Activated T-helper 1 cell treated with anti-CD3 and anti-CD28 coated beads, Interleukin-12 subunit alpha, Interleukin-12 subunit beta, Interleukin-2, Interleukin-4 antibody, amounts not matched to agents 30 ng/mL and 10 ng/mL and 1 ng/mL, durations not matched to agents 14 hours and 24 hours and 36 hours (primary cell): ENCODE measurements at regions of chr17 and their contacts with region 1.

Region 1: GRCh38 chr17:2336215-2336851 is at the start of gene TSR1:
- DNase-seq: peak; percentile 86
- H3K4me3 Mint-ChIP-seq: no peak within 1 kb of the TSS
- H3K27ac Mint-ChIP-seq: peak within 1 kb of the TSS; percentile 94
- H3K4me1 Mint-ChIP-seq: peaks cover 5% of the 10 kb centered on the region
- H3K27me3 Mint-ChIP-seq: no peaks in the 10 kb centered on the region
- total RNA-seq, gene TSR1: 91.3 and 92.9 TPM in 2 replicates

Region 2: GRCh38 chr17:1365445-1366039 is 970.8 kb before region 1 on chr17:
- intact Hi-C with region 1: loop called (anchors 10 kb)
- DNase-seq: peak; percentile 48
- H3K4me3 Mint-ChIP-seq: no peak overlapping the region
- H3K27ac Mint-ChIP-seq: no peak overlapping the region
- H3K4me1 Mint-ChIP-seq: peaks cover 47% of the 10 kb centered on the region
- H3K27me3 Mint-ChIP-seq: no peaks in the 10 kb centered on the region

Region 3: DNA sequence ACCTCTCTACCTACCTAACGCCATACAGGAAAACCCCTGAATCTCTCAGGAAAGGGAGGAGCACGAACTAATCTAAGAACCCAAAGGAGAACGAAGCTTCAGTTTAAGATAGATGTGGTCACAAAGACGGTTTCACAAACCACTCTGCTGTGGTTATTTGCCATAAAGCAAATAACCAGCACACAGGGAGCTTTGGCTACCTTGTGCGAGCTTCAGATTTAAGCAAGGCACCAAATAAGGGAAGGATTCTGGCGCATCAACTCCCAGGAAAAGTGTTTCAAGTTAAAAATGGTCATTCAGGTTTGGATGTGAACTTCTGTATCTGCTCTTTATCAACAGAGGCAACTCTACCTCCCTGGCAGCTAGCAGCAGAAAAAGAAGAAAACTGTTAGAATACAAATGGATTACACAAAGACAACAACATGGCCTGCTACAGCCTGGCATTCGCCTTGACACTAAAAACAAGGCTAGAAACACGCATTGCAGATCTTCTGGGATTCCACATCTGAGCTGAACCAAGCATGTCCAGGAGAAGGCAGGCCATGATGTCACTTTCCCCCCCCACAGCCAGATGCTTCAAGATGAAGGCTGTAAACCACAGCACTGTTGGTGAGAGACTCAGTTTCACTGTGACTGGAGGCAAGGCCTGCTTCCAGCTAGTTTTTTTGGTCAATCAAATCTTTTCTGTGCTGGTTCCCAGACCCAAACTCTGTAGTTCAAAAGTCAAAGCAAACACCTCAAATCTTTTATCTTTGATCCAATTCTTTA is 76.4 kb before region 1 on chr17:
- intact Hi-C with region 1: loop called (anchors 2 kb)
- DNase-seq: peak; percentile 76
- H3K4me3 Mint-ChIP-seq: peak overlapping the region; percentile 73
- H3K27ac Mint-ChIP-seq: peak overlapping the region; percentile 97
- H3K4me1 Mint-ChIP-seq: peaks cover 67% of the 10 kb centered on the region
- H3K27me3 Mint-ChIP-seq: no peaks in the 10 kb centered on the region

Region 4: DNA sequence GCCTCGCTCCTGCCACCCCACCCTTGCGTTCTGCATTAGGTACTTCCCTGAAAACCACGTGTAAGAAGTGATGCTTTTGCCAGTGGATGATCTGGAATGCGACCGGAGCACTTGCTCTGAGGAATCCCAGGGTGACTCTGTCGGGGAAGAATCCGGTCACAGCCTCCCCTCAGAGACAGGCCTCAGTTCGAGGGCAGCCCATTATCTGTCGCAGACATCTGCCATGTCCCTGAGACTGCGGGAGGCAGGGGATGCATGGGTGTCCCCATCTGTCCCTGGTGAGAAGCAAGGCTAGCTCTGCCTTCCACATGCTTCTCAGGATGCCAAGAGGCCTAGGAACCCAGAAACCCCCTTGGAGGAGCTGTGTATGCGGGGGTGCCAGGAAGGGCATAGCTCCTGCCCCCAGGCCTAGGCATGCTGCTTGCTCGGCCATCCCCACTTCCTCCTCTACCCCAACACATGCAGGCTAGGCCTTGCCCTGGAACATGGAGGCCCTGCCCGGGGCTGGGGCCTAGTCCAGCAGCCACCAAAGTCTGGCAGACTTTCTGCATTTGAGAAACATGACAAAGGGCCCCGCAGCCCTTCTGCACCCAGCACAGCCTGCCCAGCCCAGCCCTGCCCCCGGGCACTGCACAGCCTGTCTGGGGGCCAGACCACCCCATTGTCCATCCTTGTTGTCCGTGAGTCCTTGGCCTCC is 44.0 kb after region 1 on chr17:
- intact Hi-C with region 1: no loop called
- DNase-seq: no peak
- H3K4me3 Mint-ChIP-seq: no peak overlapping the region
- H3K27ac Mint-ChIP-seq: no peak overlapping the region
- H3K4me1 Mint-ChIP-seq: no peaks in the 10 kb centered on the region
- H3K27me3 Mint-ChIP-seq: no peaks in the 10 kb centered on the region

Region 5: GRCh38 chr17:2392252-2393173 is 56.2 kb after region 1 on chr17:
- intact Hi-C with region 1: loop called (anchors 2 kb)
- DNase-seq: peak; percentile 98
- H3K4me3 Mint-ChIP-seq: peak overlapping the region; percentile 88
- H3K27ac Mint-ChIP-seq: peak overlapping the region; percentile 96
- H3K4me1 Mint-ChIP-seq: peaks cover 34% of the 10 kb centered on the region
- H3K27me3 Mint-ChIP-seq: no peaks in the 10 kb centered on the region

Region 6: GRCh38 chr17:2416010-2416734 is 79.8 kb after region 1 on chr17:
- intact Hi-C with region 1: loop called (anchors 5 kb)
- DNase-seq: peak; percentile 78
- H3K4me3 Mint-ChIP-seq: no peak overlapping the region
- H3K27ac Mint-ChIP-seq: no peak overlapping the region
- H3K4me1 Mint-ChIP-seq: no peaks in the 10 kb centered on the region
- H3K27me3 Mint-ChIP-seq: no peaks in the 10 kb centered on the region

Region 7: GRCh38 chr17:2435181-2435741 is 98.9 kb after region 1 on chr17:
- intact Hi-C with region 1: no loop called
- DNase-seq: no peak
- H3K4me3 Mint-ChIP-seq: no peak overlapping the region
- H3K27ac Mint-ChIP-seq: no peak overlapping the region
- H3K4me1 Mint-ChIP-seq: peaks cover 5% of the 10 kb centered on the region
- H3K27me3 Mint-ChIP-seq: no peaks in the 10 kb centered on the region

Region 8: GRCh38 chr17:2592971-2593820 is 256.9 kb after region 1 on chr17 and contains the start of gene PAFAH1B1:
- intact Hi-C with region 1: loop called (anchors 5 kb)
- DNase-seq: peak; percentile 94
- H3K4me3 Mint-ChIP-seq: peak within 1 kb of the TSS; percentile 96
- H3K27ac Mint-ChIP-seq: peak within 1 kb of the TSS; percentile 94
- H3K4me1 Mint-ChIP-seq: peaks cover 28% of the 10 kb centered on the region
- H3K27me3 Mint-ChIP-seq: peaks cover 3% of the 10 kb centered on the region
- total RNA-seq, gene PAFAH1B1: 167 TPM in 2 replicates